B cell (primary cell): ENCODE measurements at regions of chr14 and their contacts with region 1.

Region 1: GRCh38 chr14:89973234-89973823 is 17.6 kb downstream of the TDP1 start:
- DNase-seq: peak; percentile 55
- ATAC-seq: peak; percentile 41
- H3K4me3 ChIP-seq: no peak overlapping the region
- H3K4me3 Mint-ChIP-seq: no peak overlapping the region
- H3K27ac ChIP-seq: no peak overlapping the region
- H3K27ac Mint-ChIP-seq: no peak overlapping the region
- H3K4me1 ChIP-seq: no peaks in the 10 kb centered on the region
- H3K4me1 Mint-ChIP-seq: no peaks in the 10 kb centered on the region
- H3K27me3 ChIP-seq: no peaks in the 10 kb centered on the region
- H3K27me3 Mint-ChIP-seq: no peaks in the 10 kb centered on the region
- CTCF ChIP-seq: peak; percentile 84

Region 2: DNA sequence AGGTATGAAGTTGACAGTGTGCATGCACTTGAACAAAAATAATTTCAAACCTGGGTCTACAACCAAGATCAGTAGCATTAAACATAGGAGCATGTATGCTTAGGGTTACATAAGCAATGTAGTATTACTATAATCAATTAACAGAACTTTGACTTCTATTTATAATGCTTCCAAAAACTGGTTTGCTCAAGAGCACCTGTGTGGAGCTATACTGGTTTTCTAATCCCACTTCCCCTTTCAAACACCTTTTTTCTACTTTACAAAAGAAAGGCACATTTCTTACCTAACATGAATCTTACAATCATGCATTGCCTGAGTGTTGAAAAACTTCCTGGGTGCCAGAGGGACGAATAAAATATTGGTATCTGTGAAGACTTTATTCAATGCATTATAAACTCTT is 91.5 kb before region 1 on chr14:
- CTCF ChIA-PET with region 1: no interaction called
- POLR2A ChIA-PET with region 1: no interaction called
- intact Hi-C with region 1: no loop called
- DNase-seq: no peak
- ATAC-seq: no peak
- H3K4me3 ChIP-seq: no peak overlapping the region
- H3K4me3 Mint-ChIP-seq: no peak overlapping the region
- H3K27ac ChIP-seq: no peak overlapping the region
- H3K27ac Mint-ChIP-seq: no peak overlapping the region
- H3K4me1 ChIP-seq: peaks cover 0 to 4% of the 10 kb centered on the region in 2 donors
- H3K4me1 Mint-ChIP-seq: peaks cover 5% of the 10 kb centered on the region
- H3K27me3 ChIP-seq: no peaks in the 10 kb centered on the region
- H3K27me3 Mint-ChIP-seq: no peaks in the 10 kb centered on the region
- CTCF ChIP-seq: no peak

Region 3: DNA sequence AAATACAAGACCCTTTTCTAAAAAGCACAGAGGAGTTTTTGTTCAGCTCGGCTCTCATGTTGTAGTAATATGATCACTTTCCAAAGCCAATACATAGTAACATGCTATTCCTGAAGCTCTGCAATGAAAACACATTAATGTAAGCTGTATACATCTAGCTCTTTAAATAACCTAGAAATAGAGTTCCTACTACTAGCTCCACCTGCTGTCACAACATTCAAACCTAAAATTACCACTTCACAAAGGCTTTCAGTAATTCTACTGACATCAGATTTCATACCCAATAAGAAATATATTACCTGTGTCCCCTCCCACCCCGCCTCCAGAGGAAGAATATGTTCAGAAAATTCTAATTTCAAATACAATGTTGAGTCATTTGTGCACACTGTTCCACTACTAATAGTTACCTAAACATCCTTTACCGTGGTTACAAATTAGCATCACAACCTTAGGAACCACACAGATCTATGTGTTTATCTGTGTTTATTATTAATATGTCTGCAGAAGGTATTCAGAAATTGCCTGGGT is 36.6 kb before region 1 on chr14:
- CTCF ChIA-PET with region 1: interaction called, 7 read pairs
- POLR2A ChIA-PET with region 1: no interaction called
- intact Hi-C with region 1: loop called (anchors 2 kb)
- DNase-seq: no peak
- ATAC-seq: no peak
- H3K4me3 ChIP-seq: no peak overlapping the region
- H3K4me3 Mint-ChIP-seq: no peak overlapping the region
- H3K27ac ChIP-seq: no peak overlapping the region
- H3K27ac Mint-ChIP-seq: no peak overlapping the region
- H3K4me1 ChIP-seq: no peaks in the 10 kb centered on the region
- H3K4me1 Mint-ChIP-seq: no peaks in the 10 kb centered on the region
- H3K27me3 ChIP-seq: no peaks in the 10 kb centered on the region
- H3K27me3 Mint-ChIP-seq: no peaks in the 10 kb centered on the region
- CTCF ChIP-seq: no peak

Region 4: DNA sequence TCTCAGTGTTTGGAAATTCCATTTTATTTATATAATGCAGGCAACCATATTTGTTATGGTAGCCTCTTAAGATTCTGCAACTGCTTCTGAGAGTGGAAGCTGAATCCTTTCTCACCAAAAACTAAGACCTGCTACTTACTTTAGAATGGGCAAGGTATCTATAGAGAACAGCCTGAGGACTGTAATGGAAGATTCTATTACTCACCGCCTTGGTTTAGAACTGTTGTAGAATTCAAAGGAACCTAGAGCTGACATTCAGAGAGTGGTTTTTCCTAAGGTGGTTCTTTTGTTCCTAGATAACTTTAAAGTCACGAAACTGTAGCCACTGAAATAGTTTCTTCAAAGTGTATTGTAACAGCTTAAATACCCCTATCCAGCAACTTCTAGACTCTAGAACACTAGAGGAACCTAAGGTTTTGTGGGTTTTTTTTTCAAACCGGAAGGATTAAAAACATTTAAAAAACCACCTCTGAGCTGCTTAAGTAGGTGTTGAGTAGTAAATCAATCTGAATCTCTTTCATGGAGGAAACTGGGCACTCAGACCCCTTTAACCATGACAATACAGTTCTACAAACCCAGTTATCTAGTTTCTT is 13.4 kb before region 1 on chr14:
- CTCF ChIA-PET with region 1: interaction called, 24 read pairs
- POLR2A ChIA-PET with region 1: no interaction called
- intact Hi-C with region 1: no loop called
- DNase-seq: no peak
- ATAC-seq: no peak
- H3K4me3 ChIP-seq: no peak overlapping the region
- H3K4me3 Mint-ChIP-seq: no peak overlapping the region
- H3K27ac ChIP-seq: no peak overlapping the region
- H3K27ac Mint-ChIP-seq: no peak overlapping the region
- H3K4me1 ChIP-seq: peaks cover 14 to 16% of the 10 kb centered on the region in 2 donors
- H3K4me1 Mint-ChIP-seq: peaks cover 41% of the 10 kb centered on the region
- H3K27me3 ChIP-seq: no peaks in the 10 kb centered on the region
- H3K27me3 Mint-ChIP-seq: no peaks in the 10 kb centered on the region
- CTCF ChIP-seq: no peak

Region 5: GRCh38 chr14:89983375-89983774 is 10.0 kb after region 1 on chr14:
- CTCF ChIA-PET with region 1: interaction called, 37 read pairs
- POLR2A ChIA-PET with region 1: no interaction called
- intact Hi-C with region 1: no loop called
- DNase-seq: no peak
- ATAC-seq: no peak
- H3K4me3 ChIP-seq: no peak overlapping the region
- H3K4me3 Mint-ChIP-seq: no peak overlapping the region
- H3K27ac ChIP-seq: no peak overlapping the region
- H3K27ac Mint-ChIP-seq: no peak overlapping the region
- H3K4me1 ChIP-seq: no peaks in the 10 kb centered on the region
- H3K4me1 Mint-ChIP-seq: no peaks in the 10 kb centered on the region
- H3K27me3 ChIP-seq: no peaks in the 10 kb centered on the region
- H3K27me3 Mint-ChIP-seq: no peaks in the 10 kb centered on the region
- CTCF ChIP-seq: no peak

Region 6: GRCh38 chr14:90168425-90169105 is 195.2 kb after region 1 on chr14:
- CTCF ChIA-PET with region 1: no interaction called
- POLR2A ChIA-PET with region 1: no interaction called
- intact Hi-C with region 1: no loop called
- DNase-seq: no peak
- ATAC-seq: no peak
- H3K4me3 ChIP-seq: no peak overlapping the region
- H3K4me3 Mint-ChIP-seq: no peak overlapping the region
- H3K27ac ChIP-seq: no peak overlapping the region
- H3K27ac Mint-ChIP-seq: no peak overlapping the region
- H3K4me1 ChIP-seq: no peaks in the 10 kb centered on the region
- H3K4me1 Mint-ChIP-seq: no peaks in the 10 kb centered on the region
- H3K27me3 ChIP-seq: no peaks in the 10 kb centered on the region
- H3K27me3 Mint-ChIP-seq: peaks cover 25% of the 10 kb centered on the region
- CTCF ChIP-seq: no peak